PC-3 (cell line): ENCODE measurements at regions of chr9 and their contacts with region 1.

Region 1: DNA sequence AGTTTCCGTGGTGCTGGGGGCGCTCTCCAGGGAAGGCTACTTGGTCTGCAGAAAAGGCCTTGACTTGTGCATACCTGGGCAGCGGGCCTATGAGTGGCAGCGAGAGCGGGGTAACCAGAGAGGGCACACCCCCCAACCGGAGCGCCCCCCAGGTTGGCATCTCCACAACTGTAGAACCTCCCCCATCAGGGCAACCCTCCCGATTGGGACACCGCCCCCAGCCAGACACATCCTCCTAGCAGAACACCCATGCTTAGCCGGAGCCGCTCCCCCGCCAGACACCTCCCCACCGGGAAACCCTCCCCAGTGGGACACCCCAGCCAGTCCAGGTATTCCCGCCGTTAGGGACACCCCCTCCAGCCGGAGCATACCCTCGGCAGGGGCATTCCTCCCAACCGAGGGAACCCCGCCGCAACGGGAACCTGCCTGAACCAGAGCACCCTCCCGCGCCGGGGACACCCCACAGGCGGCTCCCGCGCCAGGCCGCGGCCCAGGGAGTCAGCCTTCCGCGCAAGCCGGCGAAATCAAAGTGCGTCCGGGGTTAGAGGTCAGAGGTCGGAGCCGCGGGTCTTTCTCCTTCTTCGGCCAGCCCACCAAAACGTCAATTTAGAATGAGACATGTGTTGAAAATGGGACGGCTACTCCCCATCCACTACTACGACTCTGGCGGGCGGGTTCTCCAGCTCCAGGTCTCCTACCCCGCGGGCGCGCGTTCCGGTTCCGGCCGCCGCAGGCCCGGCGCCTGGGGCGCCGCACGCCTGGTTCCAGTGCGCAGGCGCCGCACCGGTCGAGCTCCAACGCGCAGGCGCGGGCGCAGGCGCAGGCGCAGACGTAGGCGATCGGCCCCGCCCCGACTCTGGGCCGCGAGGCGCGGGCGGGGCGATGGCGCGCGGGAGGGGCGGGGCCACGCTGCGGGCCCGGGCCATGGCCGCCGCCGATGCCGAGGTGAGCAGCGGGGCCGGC is at the start of gene EHMT1:
- DNase-seq: peak; percentile 84
- ATAC-seq: peak; percentile 54
- H3K4me3 ChIP-seq: peak within 1 kb of the TSS; percentile 96
- H3K27ac ChIP-seq: peak within 1 kb of the TSS; percentile 80
- H3K4me1 ChIP-seq: peaks cover 21% of the 10 kb centered on the region
- H3K27me3 ChIP-seq: no peaks in the 10 kb centered on the region
- CTCF ChIP-seq: peak; percentile 33; the same call in 1 of the 2 replicates
- total RNA-seq, gene EHMT1: 42.8 and 76.3 TPM in 2 replicates

Region 2: DNA sequence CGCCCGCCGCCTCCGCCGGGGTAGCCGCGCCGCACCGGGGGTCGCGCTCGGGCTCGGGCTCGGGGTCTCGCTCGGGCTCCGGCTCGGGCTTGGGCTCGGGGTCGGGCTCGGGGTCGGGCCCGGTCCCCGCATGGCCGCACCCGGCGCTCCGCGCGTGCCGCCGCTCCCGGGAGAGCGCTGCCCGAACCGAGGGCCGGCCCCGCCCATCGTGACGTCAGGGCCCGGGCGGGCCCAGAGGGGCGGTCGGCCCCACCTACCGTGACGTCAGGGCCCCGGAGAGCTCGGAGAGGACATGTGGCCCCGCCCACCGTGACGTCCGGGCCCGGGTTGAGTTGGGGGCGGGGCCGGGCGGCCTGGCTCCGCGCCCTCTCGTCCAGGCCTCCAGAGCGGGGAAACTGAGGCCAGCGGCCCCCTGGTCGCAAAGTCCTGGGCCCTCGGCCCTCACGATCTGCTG is 159.2 kb before region 1 on chr9 and contains the start of gene NSMF:
- CTCF ChIA-PET with region 1: no interaction called
- POLR2A ChIA-PET with region 1: no interaction called
- intact Hi-C with region 1: no loop called
- DNase-seq: peak; percentile 91
- ATAC-seq: peak; percentile 90
- H3K4me3 ChIP-seq: peak within 1 kb of the TSS; percentile 82
- H3K27ac ChIP-seq: peak within 1 kb of the TSS; percentile 26; the same call in 1 of the 2 replicates
- H3K4me1 ChIP-seq: peaks cover 4% of the 10 kb centered on the region; the same call in 1 of the 2 replicates
- H3K27me3 ChIP-seq: no peaks in the 10 kb centered on the region
- CTCF ChIP-seq: no peak
- total RNA-seq, gene NSMF: 29.5 and 30.8 TPM in 2 replicates

Region 3: GRCh38 chr9:137590462-137591383 is 27.7 kb before region 1 on chr9 and contains the start of gene ZMYND19:
- CTCF ChIA-PET with region 1: no interaction called
- POLR2A ChIA-PET with region 1: interaction called, 14 read pairs
- intact Hi-C with region 1: no loop called
- DNase-seq: peak; percentile 86
- ATAC-seq: peak; percentile 94
- H3K4me3 ChIP-seq: peak within 1 kb of the TSS; percentile 89
- H3K27ac ChIP-seq: no peak within 1 kb of the TSS
- H3K4me1 ChIP-seq: 0 out of 2 replicates have a peak, but pooled peaks cover 9% of the 10 kb centered on the region
- H3K27me3 ChIP-seq: no peaks in the 10 kb centered on the region
- CTCF ChIP-seq: no peak
- total RNA-seq, gene ZMYND19: 39.5 and 42.6 TPM in 2 replicates